CD4-positive, alpha-beta T cell (primary cell): ENCODE measurements at regions of chr17 and their contacts with region 1.

Region 1: DNA sequence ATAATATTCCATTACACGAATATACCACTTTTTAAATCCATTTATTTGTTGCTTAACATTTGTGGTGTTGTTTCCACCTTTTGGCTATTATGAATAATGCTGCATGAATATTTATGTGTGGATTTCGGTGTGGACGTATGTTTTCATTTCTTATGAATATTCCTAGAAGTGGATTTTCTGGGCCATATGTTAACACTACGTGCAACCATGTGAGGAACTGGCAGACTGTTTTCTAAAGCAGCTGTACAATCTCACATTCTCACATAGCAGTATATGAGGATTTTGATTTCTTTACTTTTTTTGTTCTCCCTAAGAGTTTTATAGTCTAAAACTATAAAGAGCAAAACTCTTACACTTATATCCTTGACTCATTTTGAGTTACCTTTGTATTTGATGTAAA is 143.4 kb downstream of the MAP2K4 start:
- DNase-seq: no peak
- ATAC-seq: no peak
- H3K4me3 ChIP-seq: no peak overlapping the region
- H3K4me3 Mint-ChIP-seq: no peak overlapping the region
- H3K27ac ChIP-seq: no peak overlapping the region
- H3K27ac Mint-ChIP-seq: no peak overlapping the region
- H3K4me1 ChIP-seq: no peaks in the 10 kb centered on the region
- H3K4me1 Mint-ChIP-seq: no peaks in the 10 kb centered on the region
- H3K27me3 ChIP-seq: no peaks in the 10 kb centered on the region
- H3K27me3 Mint-ChIP-seq: peaks cover 3% of the 10 kb centered on the region
- CTCF ChIP-seq: no peak

Region 2: GRCh38 chr17:11515901-11516300 is 648.2 kb before region 1 on chr17:
- CTCF ChIA-PET with region 1: no interaction called
- POLR2A ChIA-PET with region 1: no interaction called
- intact Hi-C with region 1: no loop called
- DNase-seq: no peak
- ATAC-seq: no peak
- H3K4me3 ChIP-seq: no peak overlapping the region
- H3K4me3 Mint-ChIP-seq: no peak overlapping the region
- H3K27ac ChIP-seq: no peak overlapping the region
- H3K27ac Mint-ChIP-seq: no peak overlapping the region
- H3K4me1 ChIP-seq: no peaks in the 10 kb centered on the region
- H3K4me1 Mint-ChIP-seq: no peaks in the 10 kb centered on the region
- H3K27me3 ChIP-seq: no peaks in the 10 kb centered on the region
- H3K27me3 Mint-ChIP-seq: no peaks in the 10 kb centered on the region
- CTCF ChIP-seq: no peak

Region 3: DNA sequence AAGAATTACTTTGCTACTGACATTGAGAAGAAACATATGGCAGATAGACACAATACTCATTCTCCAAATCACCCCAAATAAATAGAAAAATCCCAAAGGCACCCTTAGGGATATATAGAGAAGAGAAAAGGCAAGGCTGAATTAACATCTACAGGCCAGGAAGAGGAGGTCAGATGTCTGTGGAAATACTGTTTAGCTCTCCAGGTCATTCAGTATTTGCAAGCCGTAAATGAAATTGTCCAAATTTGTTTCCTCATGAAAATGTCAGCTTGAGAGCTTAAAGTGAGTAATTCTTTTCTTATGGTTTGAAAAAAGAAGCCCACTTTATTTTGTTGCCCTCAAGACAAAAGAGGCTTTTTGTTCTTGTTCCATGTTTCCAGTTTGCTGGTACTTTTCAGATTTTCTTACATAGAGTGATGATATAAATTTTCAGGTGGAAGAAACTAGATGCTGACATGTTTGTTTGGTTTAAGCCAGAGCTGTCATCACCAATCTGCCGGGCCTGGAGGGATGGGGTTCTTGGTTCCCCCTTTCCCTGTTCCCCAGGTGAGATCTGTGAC is 45.6 kb after region 1 on chr17:
- CTCF ChIA-PET with region 1: no interaction called
- POLR2A ChIA-PET with region 1: no interaction called
- intact Hi-C with region 1: loop called in 1 of 2 experiments (anchors 10 kb)
- DNase-seq: no peak
- ATAC-seq: no peak
- H3K4me3 ChIP-seq: no peak overlapping the region
- H3K4me3 Mint-ChIP-seq: no peak overlapping the region
- H3K27ac ChIP-seq: no peak overlapping the region
- H3K27ac Mint-ChIP-seq: no peak overlapping the region
- H3K4me1 ChIP-seq: no peaks in the 10 kb centered on the region
- H3K4me1 Mint-ChIP-seq: no peaks in the 10 kb centered on the region
- H3K27me3 ChIP-seq: no peaks in the 10 kb centered on the region
- H3K27me3 Mint-ChIP-seq: peaks cover 2% of the 10 kb centered on the region
- CTCF ChIP-seq: no peak